ENCODE measurements at regions of chr1 and their contacts with region 1.

Region 1: GRCh38 chr1:231337472-231338269 is at the start of gene EXOC8:
- DNase-seq: peak; percentile 97
- H3K4me3 Mint-ChIP-seq: peak within 1 kb of the TSS; percentile 100
- H3K27ac Mint-ChIP-seq: peak within 1 kb of the TSS; percentile 97
- H3K4me1 Mint-ChIP-seq: peaks cover 53% of the 10 kb centered on the region
- H3K27me3 Mint-ChIP-seq: no peaks in the 10 kb centered on the region
- total RNA-seq, gene EXOC8: 11.5 to 12.0 TPM

Region 2: GRCh38 chr1:231039161-231040018 is 298.3 kb before region 1 on chr1:
- CTCF ChIA-PET with region 1: no interaction called
- intact Hi-C with region 1: loop called (anchors 5 kb)
- DNase-seq: peak; percentile 56
- H3K4me3 Mint-ChIP-seq: peak overlapping the region; percentile 75
- H3K27ac Mint-ChIP-seq: no peak overlapping the region
- H3K4me1 Mint-ChIP-seq: peaks cover 24% of the 10 kb centered on the region
- H3K27me3 Mint-ChIP-seq: peaks cover 2% of the 10 kb centered on the region

Region 3: DNA sequence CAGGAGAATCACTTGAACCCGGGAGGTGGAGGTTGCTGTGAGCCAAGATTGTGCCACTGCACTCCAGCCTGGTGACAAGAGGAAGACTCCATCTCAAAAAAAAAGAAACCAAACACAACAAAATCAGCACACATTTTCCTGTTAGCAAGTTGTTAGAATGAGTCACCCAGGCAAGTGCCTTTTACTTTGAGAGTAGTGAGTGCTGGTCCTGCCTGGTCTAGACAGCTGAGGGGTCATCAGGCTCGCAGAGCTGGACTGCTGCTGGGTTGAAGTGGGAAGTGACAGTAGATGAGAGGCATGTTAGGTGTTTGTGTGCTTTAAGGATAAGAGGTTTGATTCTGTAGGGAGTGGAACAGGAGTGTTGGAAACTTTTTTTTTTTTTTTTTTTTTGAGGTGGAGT is 64.8 kb before region 1 on chr1:
- CTCF ChIA-PET with region 1: no interaction called
- intact Hi-C with region 1: loop called (anchors 5 kb)
- DNase-seq: peak; percentile 18
- H3K4me3 Mint-ChIP-seq: no peak overlapping the region
- H3K27ac Mint-ChIP-seq: peak overlapping the region; percentile 98
- H3K4me1 Mint-ChIP-seq: peaks cover 22% of the 10 kb centered on the region
- H3K27me3 Mint-ChIP-seq: no peaks in the 10 kb centered on the region

Region 4: GRCh38 chr1:231528172-231529029 is 190.7 kb after region 1 on chr1 and contains the start of gene TSNAX:
- CTCF ChIA-PET with region 1: interaction called, 3 read pairs
- intact Hi-C with region 1: loop called (anchors 1 kb)
- DNase-seq: peak; percentile 86
- H3K4me3 Mint-ChIP-seq: peak within 1 kb of the TSS; percentile 96
- H3K27ac Mint-ChIP-seq: peak within 1 kb of the TSS; percentile 97
- H3K4me1 Mint-ChIP-seq: peaks cover 47% of the 10 kb centered on the region
- H3K27me3 Mint-ChIP-seq: no peaks in the 10 kb centered on the region
- total RNA-seq, gene TSNAX: 25.7 to 28.2 TPM

Region 5: GRCh38 chr1:231626535-231626945 is 288.9 kb after region 1 on chr1 and contains the start of gene DISC1:
- CTCF ChIA-PET with region 1: no interaction called
- intact Hi-C with region 1: loop called (anchors 1 kb)
- DNase-seq: peak; percentile 76
- H3K4me3 Mint-ChIP-seq: peak within 1 kb of the TSS; percentile 82
- H3K27ac Mint-ChIP-seq: peak within 1 kb of the TSS; percentile 78
- H3K4me1 Mint-ChIP-seq: peaks cover 28% of the 10 kb centered on the region
- H3K27me3 Mint-ChIP-seq: no peaks in the 10 kb centered on the region
- total RNA-seq, gene DISC1: 4.8 to 5.0 TPM

Measured in activated naive CD4-positive, alpha-beta T cell treated with anti-CD3 and anti-CD28 coated beads for 36 hours (primary cell).